PC-3 (cell line): ENCODE measurements at regions of chr20 and their contacts with region 1.

Region 1: DNA sequence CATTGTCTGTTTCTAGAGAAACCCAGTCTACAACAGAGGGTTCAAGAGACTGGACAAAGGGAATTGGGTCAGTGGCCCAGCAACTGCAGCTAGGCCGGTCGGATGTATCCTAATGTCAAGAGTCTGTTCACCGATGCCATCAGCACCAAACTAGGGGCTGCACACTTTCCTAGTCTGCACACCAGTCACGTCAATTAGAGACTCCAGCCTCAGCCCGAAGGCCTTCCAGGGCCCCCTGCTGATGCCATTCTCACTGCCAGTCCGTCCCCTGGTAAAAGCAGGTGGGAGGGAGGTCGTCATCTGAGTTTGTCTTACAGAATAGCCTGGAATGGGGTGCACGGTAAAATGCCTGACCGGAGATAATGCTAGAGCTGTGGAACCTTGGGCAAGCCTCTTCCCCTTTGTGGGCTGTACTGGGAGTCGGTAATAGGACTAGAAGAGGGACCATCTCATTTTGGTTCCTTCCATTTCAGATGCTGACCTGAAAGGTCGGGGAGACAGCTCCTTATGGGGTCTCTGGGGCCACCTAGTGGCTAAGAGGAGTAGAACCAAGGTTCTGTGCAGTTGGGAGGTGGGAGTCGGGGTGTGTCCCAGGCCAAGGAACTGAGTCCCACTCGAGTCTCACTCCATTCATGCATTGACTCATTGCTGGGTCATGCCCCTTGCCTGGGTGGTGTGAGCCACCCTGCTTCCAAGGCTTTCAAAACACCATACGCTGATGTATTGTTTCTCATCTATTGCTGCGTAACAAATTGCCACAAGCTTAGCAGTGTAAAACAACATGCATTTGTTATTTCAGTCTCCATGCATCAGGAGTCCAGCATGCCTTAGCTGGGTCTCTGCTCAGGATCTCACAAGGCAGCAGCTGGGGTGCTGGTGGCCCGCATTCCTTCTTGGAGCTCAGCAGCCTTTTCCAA is 5.1 kb downstream of the SOX12 start:
- DNase-seq: peak; percentile 83
- ATAC-seq: peak; percentile 18
- H3K4me3 ChIP-seq: no peak overlapping the region
- H3K27ac ChIP-seq: no peak overlapping the region
- H3K4me1 ChIP-seq: peaks cover 16% of the 10 kb centered on the region
- H3K27me3 ChIP-seq: no peaks in the 10 kb centered on the region
- CTCF ChIP-seq: peak; percentile 97

Region 2: DNA sequence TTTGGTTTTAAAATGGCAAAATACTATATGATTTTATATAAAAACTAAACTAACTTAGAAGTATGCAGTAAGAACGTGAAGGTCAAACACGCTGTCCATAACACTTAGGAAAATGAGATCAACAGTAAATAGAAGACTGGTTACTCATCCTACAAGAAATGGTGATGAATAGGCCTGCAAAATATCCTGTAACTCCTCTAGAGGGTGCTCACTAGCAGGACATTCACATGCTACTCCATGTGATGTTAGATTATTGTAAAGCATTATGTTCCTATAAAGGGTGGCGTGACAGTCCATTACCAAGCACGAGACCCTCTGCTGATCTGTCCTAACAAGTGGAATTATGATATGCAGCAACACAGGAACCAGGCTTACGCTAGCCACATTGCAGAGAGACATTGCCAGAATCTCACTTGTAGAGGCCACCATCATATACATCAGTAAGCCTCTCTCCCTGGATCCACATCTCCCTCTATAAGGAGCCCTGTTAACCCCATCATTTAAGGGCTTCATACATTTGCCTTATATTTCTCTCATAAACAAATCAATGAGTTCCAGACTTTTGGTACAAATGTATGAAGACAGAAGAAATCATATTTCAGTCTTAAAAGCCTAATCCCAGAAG is 121.4 kb before region 1 on chr20:
- CTCF ChIA-PET with region 1: no interaction called
- POLR2A ChIA-PET with region 1: no interaction called
- intact Hi-C with region 1: loop called (anchors 1 kb)
- DNase-seq: peak; percentile 78
- ATAC-seq: peak; percentile 97
- H3K4me3 ChIP-seq: no peak overlapping the region
- H3K27ac ChIP-seq: no peak overlapping the region
- H3K4me1 ChIP-seq: no peaks in the 10 kb centered on the region
- H3K27me3 ChIP-seq: peaks cover 63% of the 10 kb centered on the region
- CTCF ChIP-seq: peak; percentile 81

Region 3: GRCh38 chr20:251354-251753 is 79.1 kb before region 1 on chr20:
- CTCF ChIA-PET with region 1: no interaction called
- POLR2A ChIA-PET with region 1: interaction called, 16 read pairs
- intact Hi-C with region 1: no loop called
- DNase-seq: no peak
- ATAC-seq: no peak
- H3K4me3 ChIP-seq: no peak overlapping the region
- H3K27ac ChIP-seq: no peak overlapping the region
- H3K4me1 ChIP-seq: no peaks in the 10 kb centered on the region
- H3K27me3 ChIP-seq: peaks cover 33% of the 10 kb centered on the region
- CTCF ChIP-seq: no peak